Tibial artery (tissue), 4 donors: ENCODE measurements at regions of chr10 and their contacts with region 1.

Region 1: DNA sequence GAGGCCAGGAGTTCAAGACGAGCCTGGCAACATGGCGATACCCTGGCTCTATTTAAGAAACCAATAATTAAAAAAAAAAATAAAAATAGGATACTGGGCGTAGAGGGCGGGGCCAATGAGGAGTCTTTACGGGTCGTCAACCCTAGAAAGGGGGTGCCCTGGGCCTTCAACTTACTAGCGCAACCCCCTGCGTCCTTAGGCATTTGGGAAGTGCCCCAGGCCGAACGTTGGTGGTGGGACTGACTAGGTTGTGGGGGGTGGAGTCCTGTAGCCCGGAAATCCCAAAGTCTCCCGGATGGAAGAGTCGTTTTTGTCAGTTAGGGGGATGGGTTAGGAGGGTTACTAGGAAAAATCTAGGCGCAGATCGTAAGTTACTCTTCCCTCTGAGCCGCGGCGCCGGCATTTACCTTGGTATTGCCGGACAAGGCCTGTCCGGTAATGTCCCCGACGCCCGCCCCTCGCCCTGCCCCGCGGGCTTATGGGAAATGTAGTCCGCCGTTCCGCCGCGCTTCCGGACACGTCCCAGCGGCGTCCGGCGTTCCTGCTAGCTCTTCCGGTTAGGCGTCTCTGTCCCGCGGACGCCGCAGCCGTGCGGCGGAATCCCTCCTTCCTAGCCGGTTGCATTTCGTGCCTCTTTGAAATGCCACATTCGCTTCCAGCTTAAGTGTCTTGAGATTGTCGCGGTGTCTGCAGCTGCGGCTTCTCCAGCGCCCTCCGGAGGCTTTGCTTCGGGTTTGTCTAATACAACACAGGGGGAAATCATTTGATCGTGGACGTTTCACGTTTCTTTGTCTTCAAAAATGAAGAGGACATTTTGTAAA is 1.3 kb upstream of the ACBD5 start:
- DNase-seq: peak; percentile 88 to 95
- H3K4me3 ChIP-seq: peak overlapping the region; percentile 80
- H3K27ac ChIP-seq: peak overlapping the region; percentile 96 to 98
- H3K4me1 ChIP-seq: peaks cover 5 to 27% (median 18%) of the 10 kb centered on the region in 4 donors
- H3K27me3 ChIP-seq: no peaks in the 10 kb centered on the region
- CTCF ChIP-seq: peak; percentile 41 to 58

Region 2: GRCh38 chr10:26869528-26869927 is 372.3 kb before region 1 on chr10:
- intact Hi-C with region 1: loop called (anchors 5 kb)
- DNase-seq: no peak
- H3K4me3 ChIP-seq: no peak overlapping the region
- H3K27ac ChIP-seq: no peak overlapping the region
- H3K4me1 ChIP-seq: no peaks in the 10 kb centered on the region
- H3K27me3 ChIP-seq: peaks cover 0 to 2% of the 10 kb centered on the region in 2 donors
- CTCF ChIP-seq: no peak